CD4-positive, alpha-beta memory T cell (primary cell): ENCODE measurements at regions of chr14 and their contacts with region 1.

Region 1: DNA sequence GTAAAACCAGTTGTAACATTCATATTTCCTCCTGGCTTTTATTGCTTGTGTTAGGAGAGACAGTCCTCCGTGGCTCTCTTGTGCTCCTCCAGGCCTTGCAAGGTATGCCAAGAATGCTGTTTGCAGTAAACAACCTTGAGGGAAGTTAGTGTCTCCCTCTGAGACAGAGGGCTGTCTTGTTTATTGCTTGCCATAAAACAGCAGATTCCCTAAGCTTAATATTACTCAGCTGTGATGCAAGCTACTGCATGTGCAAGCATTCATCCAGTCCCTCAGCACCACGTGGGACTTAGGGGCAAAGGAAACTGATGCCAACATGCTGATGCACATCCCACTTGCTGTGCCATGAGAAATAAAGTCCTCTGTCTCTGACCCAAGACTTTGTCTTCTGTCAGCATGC is 6.6 kb downstream of the POMT2 start:
- DNase-seq: no peak
- H3K4me3 ChIP-seq: no peak overlapping the region
- H3K4me3 Mint-ChIP-seq: no peak overlapping the region
- H3K27ac ChIP-seq: no peak overlapping the region
- H3K27ac Mint-ChIP-seq: no peak overlapping the region
- H3K4me1 ChIP-seq: no peaks in the 10 kb centered on the region
- H3K4me1 Mint-ChIP-seq: no peaks in the 10 kb centered on the region
- H3K27me3 ChIP-seq: no peaks in the 10 kb centered on the region
- H3K27me3 Mint-ChIP-seq: no peaks in the 10 kb centered on the region

Region 2: DNA sequence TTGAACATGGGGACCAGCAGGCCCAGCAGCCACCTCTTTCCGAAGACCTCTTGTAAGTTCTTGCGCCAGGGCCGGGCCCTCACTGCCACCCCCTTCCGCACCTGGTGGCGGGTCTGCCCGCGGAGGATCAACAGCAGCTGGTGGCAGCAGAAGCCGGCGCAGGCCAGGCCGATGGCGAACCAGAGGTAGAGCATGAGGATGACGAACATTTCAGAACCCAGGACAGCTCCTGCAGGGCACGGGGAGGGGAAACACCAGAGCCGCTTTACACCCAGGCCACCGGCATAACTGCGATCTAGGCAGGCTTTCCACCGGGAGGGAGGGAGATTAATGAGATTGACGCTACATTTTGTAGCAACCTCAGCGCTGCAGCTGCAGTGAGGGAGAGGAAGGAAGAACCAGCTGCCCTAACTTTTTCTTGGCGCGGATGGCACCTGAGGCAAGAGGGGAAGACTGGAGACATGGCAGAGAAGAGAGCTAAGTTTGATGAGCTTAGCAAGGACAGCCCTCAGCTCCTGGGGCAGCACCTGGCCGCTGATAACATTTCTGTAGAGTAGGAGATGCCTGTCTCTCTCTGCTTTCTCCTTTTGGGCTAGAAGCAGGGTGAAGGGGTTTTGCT is 180.2 kb before region 1 on chr14:
- CTCF ChIA-PET with region 1: interaction called, 12 read pairs
- POLR2A ChIA-PET with region 1: no interaction called
- intact Hi-C with region 1: loop called (anchors 5 kb)
- DNase-seq: peak; percentile 48 to 68 (median 54)
- H3K4me3 ChIP-seq: no peak overlapping the region
- H3K4me3 Mint-ChIP-seq: no peak overlapping the region
- H3K27ac ChIP-seq: no peak overlapping the region
- H3K27ac Mint-ChIP-seq: no peak overlapping the region
- H3K4me1 ChIP-seq: no peaks in the 10 kb centered on the region
- H3K4me1 Mint-ChIP-seq: peaks cover 0 to 11% (median 3%) of the 10 kb centered on the region in 4 donors
- H3K27me3 ChIP-seq: peaks cover 3% of the 10 kb centered on the region
- H3K27me3 Mint-ChIP-seq: peaks cover 41 to 57% of the 10 kb centered on the region in 2 donors

Region 3: DNA sequence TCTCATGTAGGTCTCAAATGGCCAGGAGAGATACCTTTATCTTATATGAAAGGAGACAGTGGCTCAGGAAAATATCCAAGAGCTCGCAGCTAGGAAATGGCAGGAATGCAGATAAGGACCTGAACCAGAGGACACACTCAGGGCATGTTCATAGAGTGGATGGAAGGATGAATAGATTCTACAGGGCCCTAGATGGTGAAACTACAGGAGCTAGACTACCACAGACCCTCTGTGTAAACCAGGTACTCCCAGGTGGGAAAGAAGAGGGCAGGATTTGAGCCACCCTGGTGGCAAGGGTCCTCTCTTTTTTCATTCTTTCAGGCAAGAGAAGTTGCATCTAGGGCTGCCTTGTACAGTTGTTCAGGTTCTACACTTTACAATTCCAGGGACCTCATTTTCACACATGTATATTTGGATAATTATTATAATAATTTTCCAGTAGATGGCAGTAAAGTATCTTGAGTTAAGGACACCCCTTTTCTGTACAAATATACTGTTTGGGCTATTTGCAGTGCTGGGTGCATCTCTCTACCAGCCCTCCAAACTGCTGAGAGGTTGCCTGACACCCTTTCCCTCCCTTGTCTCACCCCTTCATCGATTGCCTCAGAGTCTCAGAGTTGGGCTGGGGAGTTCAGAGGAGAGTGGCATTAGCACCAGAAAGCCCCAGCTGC is 162.0 kb before region 1 on chr14:
- CTCF ChIA-PET with region 1: interaction called, 70 read pairs
- POLR2A ChIA-PET with region 1: no interaction called
- intact Hi-C with region 1: loop called (anchors 1 kb)
- DNase-seq: peak in 4 of 5 donors; percentile 11 to 29 (median 16)
- H3K4me3 ChIP-seq: no peak overlapping the region
- H3K4me3 Mint-ChIP-seq: no peak overlapping the region
- H3K27ac ChIP-seq: no peak overlapping the region
- H3K27ac Mint-ChIP-seq: no peak overlapping the region
- H3K4me1 ChIP-seq: no peaks in the 10 kb centered on the region
- H3K4me1 Mint-ChIP-seq: no peaks in the 10 kb centered on the region
- H3K27me3 ChIP-seq: no peaks in the 10 kb centered on the region
- H3K27me3 Mint-ChIP-seq: peaks cover 13 to 48% of the 10 kb centered on the region in 2 donors

Region 4: DNA sequence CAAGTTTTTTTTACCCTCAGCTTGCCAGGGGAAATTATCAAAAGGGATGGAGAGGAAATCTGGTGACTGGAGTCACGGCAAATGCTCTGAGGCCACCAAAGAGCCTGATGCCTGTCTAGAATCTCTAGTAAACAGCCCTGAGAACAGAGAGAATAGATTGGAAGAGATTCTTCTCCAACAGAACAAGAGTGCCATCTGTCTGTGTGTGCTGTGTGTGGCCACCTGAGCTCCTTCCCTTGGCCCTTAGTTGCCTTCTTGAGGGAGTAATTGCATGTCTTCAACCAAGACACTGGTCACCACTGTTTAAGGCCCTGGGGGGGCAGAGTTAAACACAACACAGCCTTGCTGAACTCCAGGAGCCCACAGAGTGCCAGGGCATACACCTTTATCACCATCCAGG is 12.1 kb after region 1 on chr14:
- CTCF ChIA-PET with region 1: interaction called, 12 read pairs
- POLR2A ChIA-PET with region 1: no interaction called
- intact Hi-C with region 1: no loop called
- DNase-seq: no peak
- H3K4me3 ChIP-seq: no peak overlapping the region
- H3K4me3 Mint-ChIP-seq: no peak overlapping the region
- H3K27ac ChIP-seq: no peak overlapping the region
- H3K27ac Mint-ChIP-seq: no peak overlapping the region
- H3K4me1 ChIP-seq: peaks cover 8% of the 10 kb centered on the region
- H3K4me1 Mint-ChIP-seq: peaks cover 4 to 16% (median 8%) of the 10 kb centered on the region in 4 donors
- H3K27me3 ChIP-seq: no peaks in the 10 kb centered on the region
- H3K27me3 Mint-ChIP-seq: no peaks in the 10 kb centered on the region

Region 5: GRCh38 chr14:77376771-77377501 is 62.9 kb after region 1 on chr14 and contains the starts of genes SAMD15 and TMED8:
- CTCF ChIA-PET with region 1: interaction called, 11 read pairs
- POLR2A ChIA-PET with region 1: no interaction called
- intact Hi-C with region 1: no loop called
- DNase-seq: peak; percentile 81 to 87 (median 87)
- H3K4me3 ChIP-seq: peak within 1 kb of the TSS; percentile 94 to 97
- H3K4me3 Mint-ChIP-seq: peak within 1 kb of the TSS; percentile 85 to 94 (median 90)
- H3K27ac ChIP-seq: peak within 1 kb of the TSS; percentile 74
- H3K27ac Mint-ChIP-seq: peak within 1 kb of the TSS in 6 of 7 donors; percentile 84 to 95 (median 92)
- H3K4me1 ChIP-seq: peaks cover 46% of the 10 kb centered on the region
- H3K4me1 Mint-ChIP-seq: peaks cover 30 to 42% (median 36%) of the 10 kb centered on the region in 4 donors
- H3K27me3 ChIP-seq: no peaks in the 10 kb centered on the region
- H3K27me3 Mint-ChIP-seq: no peaks in the 10 kb centered on the region
- total RNA-seq, gene SAMD15: 0.11 to 0.38 TPM
- total RNA-seq, gene TMED8: 8.3 to 8.6 TPM